ENCODE measurements at regions of chr2 and their contacts with region 1.

Region 1: DNA sequence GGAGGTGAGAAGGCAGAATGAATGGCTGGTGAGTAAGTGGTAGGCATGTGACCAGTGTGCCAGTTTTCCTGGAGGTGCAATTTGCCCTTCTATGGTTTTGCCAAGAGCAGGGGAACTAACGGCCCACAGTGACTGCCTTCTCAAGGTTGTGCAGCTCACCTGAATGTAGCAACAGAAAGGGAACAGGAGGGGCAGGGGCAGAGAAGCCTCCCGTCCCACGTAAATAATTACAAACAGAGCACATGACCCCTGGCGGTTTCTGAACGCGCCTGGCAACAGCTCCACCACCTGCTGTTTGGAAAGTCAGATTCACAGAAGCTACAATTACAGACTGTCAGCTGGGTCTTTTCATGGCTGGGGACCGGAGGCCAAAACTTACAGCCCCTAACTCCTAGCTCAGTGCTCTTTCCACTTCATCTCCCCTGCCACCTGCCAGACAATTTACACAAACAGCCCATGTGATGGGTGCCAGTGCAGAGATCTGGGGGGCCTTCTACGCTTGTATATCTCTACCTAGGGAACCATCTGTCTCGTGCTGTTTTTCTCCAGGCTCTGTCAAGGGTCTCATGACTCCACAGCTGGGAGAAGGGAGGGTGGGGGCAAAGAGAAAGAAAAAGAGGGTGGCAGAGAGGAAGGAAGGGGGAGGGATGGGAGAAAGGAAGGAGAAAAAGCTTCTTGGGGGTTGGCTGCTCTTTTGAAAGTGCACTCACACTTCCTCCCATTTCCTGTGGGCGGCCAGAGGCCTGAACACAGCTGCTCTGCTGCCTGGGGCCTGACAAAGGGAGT is 69.6 kb downstream of the POLR1A start:
- DNase-seq: peak; percentile 47 to 85 (median 78)
- H3K4me3 ChIP-seq: peak overlapping the region; percentile 53
- H3K4me3 Mint-ChIP-seq: peak overlapping the region; percentile 68 to 96 (median 85)
- H3K27ac ChIP-seq: peak overlapping the region; percentile 78
- H3K27ac Mint-ChIP-seq: peak overlapping the region; percentile 97 to 100 (median 100)
- H3K4me1 ChIP-seq: peaks cover 84% of the 10 kb centered on the region
- H3K4me1 Mint-ChIP-seq: peaks cover 76 to 79% (median 78%) of the 10 kb centered on the region in 3 donors
- H3K27me3 ChIP-seq: no peaks in the 10 kb centered on the region
- H3K27me3 Mint-ChIP-seq: peaks cover 0 to 6% of the 10 kb centered on the region in 2 donors

Region 2: GRCh38 chr2:85595301-85596025 is 440.6 kb before region 1 on chr2 and contains the start of gene RNF181:
- CTCF ChIA-PET with region 1: no interaction called
- POLR2A ChIA-PET with region 1: no interaction called
- DNase-seq: peak; percentile 80 to 94 (median 90)
- H3K4me3 ChIP-seq: peak within 1 kb of the TSS; percentile 87
- H3K4me3 Mint-ChIP-seq: peak within 1 kb of the TSS; percentile 96 to 99 (median 98)
- H3K27ac ChIP-seq: peak within 1 kb of the TSS; percentile 84
- H3K27ac Mint-ChIP-seq: peak within 1 kb of the TSS; percentile 81 to 99 (median 95)
- H3K4me1 ChIP-seq: peaks cover 22% of the 10 kb centered on the region
- H3K4me1 Mint-ChIP-seq: peaks cover 34 to 52% (median 35%) of the 10 kb centered on the region in 3 donors
- H3K27me3 ChIP-seq: no peaks in the 10 kb centered on the region
- H3K27me3 Mint-ChIP-seq: no peaks in the 10 kb centered on the region
- total RNA-seq, gene RNF181: 88.2 to 95.1 TPM

Region 3: DNA sequence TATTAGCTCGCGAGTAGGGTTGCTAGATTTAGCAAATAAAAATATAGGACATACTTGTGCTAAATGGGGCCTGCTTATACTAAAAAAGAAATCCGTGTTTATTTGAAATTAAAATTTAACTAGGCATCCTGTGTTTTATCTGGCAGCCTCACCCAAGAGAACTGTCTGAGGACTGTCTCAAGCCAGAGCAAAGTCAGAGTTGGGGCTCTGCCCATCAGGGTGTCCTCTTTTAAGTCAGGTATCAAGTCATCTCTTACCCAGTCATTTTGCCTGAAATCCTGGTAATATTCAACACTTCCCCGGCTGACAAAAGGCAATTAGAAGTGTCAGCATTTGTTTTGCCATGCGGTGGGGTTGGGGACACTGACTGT is 99.0 kb before region 1 on chr2:
- CTCF ChIA-PET with region 1: no interaction called
- POLR2A ChIA-PET with region 1: no interaction called
- DNase-seq: no peak
- H3K4me3 ChIP-seq: no peak overlapping the region
- H3K4me3 Mint-ChIP-seq: no peak overlapping the region
- H3K27ac ChIP-seq: no peak overlapping the region
- H3K27ac Mint-ChIP-seq: no peak overlapping the region
- H3K4me1 ChIP-seq: peaks cover 6% of the 10 kb centered on the region
- H3K4me1 Mint-ChIP-seq: peaks cover 9 to 21% (median 11%) of the 10 kb centered on the region in 3 donors
- H3K27me3 ChIP-seq: no peaks in the 10 kb centered on the region
- H3K27me3 Mint-ChIP-seq: peaks cover 4 to 5% of the 10 kb centered on the region in 2 donors

Region 4: GRCh38 chr2:85971366-85971765 is 64.7 kb before region 1 on chr2:
- CTCF ChIA-PET with region 1: no interaction called
- POLR2A ChIA-PET with region 1: no interaction called
- DNase-seq: no peak
- H3K4me3 ChIP-seq: no peak overlapping the region
- H3K4me3 Mint-ChIP-seq: no peak overlapping the region
- H3K27ac ChIP-seq: no peak overlapping the region
- H3K27ac Mint-ChIP-seq: no peak overlapping the region
- H3K4me1 ChIP-seq: no peaks in the 10 kb centered on the region
- H3K4me1 Mint-ChIP-seq: no peaks in the 10 kb centered on the region
- H3K27me3 ChIP-seq: no peaks in the 10 kb centered on the region
- H3K27me3 Mint-ChIP-seq: no peaks in the 10 kb centered on the region

Region 5: GRCh38 chr2:86025229-86025820 is 10.8 kb before region 1 on chr2:
- CTCF ChIA-PET with region 1: interaction called, 10 read pairs
- POLR2A ChIA-PET with region 1: interaction called, 5 read pairs
- DNase-seq: no peak
- H3K4me3 ChIP-seq: no peak overlapping the region
- H3K4me3 Mint-ChIP-seq: no peak overlapping the region
- H3K27ac ChIP-seq: no peak overlapping the region
- H3K27ac Mint-ChIP-seq: peak overlapping the region in 6 of 8 donors; percentile 3 to 87 (median 54)
- H3K4me1 ChIP-seq: no peaks in the 10 kb centered on the region
- H3K4me1 Mint-ChIP-seq: peaks cover 2 to 4% (median 3%) of the 10 kb centered on the region in 3 donors
- H3K27me3 ChIP-seq: no peaks in the 10 kb centered on the region
- H3K27me3 Mint-ChIP-seq: no peaks in the 10 kb centered on the region

Region 6: DNA sequence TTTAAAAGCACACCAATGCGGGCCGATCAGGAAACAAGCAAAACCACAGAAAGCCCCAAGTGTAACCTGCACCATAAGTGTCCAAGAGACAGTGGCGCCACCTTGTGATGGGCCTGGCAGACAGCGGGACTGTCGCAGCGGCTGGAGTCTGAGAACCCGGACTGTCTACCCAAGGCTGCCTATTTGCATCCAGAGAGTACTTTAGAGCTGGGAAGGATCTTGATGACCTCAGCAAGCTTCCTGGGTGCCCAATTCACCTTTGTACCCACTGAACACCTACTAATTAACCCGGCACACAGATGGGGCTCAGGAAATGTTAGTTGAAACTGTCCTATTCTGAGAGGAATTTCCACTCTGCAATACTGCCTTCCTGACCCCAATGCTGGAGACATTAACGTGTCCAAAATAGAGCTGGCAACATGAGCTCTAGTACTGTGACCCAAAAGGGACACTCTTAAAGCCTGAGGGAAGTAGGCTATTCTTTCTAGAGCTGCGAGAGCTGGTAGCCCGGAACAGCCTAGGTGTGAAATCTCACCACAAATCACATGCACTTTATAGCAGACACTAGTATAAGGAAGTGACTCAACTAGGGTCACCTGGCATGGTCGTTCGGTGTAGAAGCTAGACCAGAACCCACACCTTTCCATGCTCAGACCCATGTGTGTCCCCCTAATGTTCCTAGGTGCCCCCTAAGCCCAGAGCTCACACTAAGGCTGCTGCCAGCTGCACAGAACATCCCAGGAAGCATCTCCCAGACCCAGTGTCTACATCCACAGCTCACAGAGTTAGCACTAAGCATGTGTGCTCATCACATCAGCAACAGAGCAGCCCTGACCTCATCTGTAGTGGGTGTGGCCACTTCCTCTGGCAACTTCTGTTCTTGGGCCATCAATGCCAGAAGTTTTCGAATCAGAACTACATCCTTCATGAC is 44.2 kb after region 1 on chr2:
- CTCF ChIA-PET with region 1: interaction called, 58 read pairs
- POLR2A ChIA-PET with region 1: interaction called, 18 read pairs
- DNase-seq: peak; percentile 71 to 89 (median 79)
- H3K4me3 ChIP-seq: no peak overlapping the region
- H3K4me3 Mint-ChIP-seq: peak overlapping the region; percentile 21 to 82 (median 69)
- H3K27ac ChIP-seq: peak overlapping the region; percentile 64
- H3K27ac Mint-ChIP-seq: peak overlapping the region; percentile 96 to 99 (median 97)
- H3K4me1 ChIP-seq: peaks cover 22% of the 10 kb centered on the region
- H3K4me1 Mint-ChIP-seq: peaks cover 29 to 35% (median 32%) of the 10 kb centered on the region in 3 donors
- H3K27me3 ChIP-seq: no peaks in the 10 kb centered on the region
- H3K27me3 Mint-ChIP-seq: peaks cover 0 to 6% of the 10 kb centered on the region in 2 donors

Region 7: DNA sequence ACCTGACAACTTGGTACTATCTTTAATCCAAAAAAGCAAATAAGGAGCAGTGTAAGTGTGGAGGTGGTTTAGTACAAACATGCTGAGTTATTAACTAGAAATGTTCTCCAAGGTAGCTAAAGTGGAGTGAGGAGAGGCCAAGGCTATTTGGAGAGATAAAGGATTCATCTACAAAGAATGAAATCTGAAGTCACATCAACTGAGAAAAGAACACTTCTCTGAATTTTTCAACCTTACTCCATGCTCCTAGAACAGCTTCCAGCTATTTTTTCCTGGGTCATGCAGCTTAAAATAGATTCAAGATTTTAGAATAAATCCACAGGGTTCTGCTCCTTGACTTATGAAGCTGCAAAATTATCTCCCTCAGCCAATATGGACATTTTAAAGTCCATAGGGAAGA is 140.5 kb after region 1 on chr2:
- CTCF ChIA-PET with region 1: no interaction called
- POLR2A ChIA-PET with region 1: no interaction called
- DNase-seq: no peak
- H3K4me3 ChIP-seq: no peak overlapping the region
- H3K4me3 Mint-ChIP-seq: no peak overlapping the region
- H3K27ac ChIP-seq: no peak overlapping the region
- H3K27ac Mint-ChIP-seq: peak overlapping the region in 2 of 8 donors; percentile 17 to 76
- H3K4me1 ChIP-seq: peaks cover 11% of the 10 kb centered on the region
- H3K4me1 Mint-ChIP-seq: peaks cover 26 to 47% (median 45%) of the 10 kb centered on the region in 3 donors
- H3K27me3 ChIP-seq: no peaks in the 10 kb centered on the region
- H3K27me3 Mint-ChIP-seq: no peaks in the 10 kb centered on the region

Measured in CD8-positive, alpha-beta memory T cell (primary cell).